Activated B cell treated with CpG ODN at 0.5 μM for 24 hours (primary cell): ENCODE measurements at regions of chr19 and their contacts with region 1.

Region 1: DNA sequence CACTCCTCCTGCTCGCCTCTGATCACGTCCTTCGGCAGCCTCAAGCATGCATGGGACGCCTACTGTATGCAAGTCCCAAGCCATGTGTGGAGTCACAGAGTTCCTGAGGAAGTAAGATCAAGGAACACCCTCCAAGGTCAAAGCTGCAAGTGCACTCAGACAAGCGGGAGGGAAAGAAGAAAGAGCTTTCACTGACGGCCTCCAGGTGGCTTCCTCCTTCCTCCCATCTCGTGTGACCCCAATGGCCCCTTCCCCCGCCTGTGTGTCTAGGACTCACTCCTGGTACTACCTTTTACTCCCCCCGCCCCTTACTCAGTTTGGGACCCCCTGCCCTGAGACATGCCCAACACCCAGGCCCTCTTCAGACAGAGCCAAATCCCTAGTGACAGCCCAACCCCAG is 6.0 kb downstream of the HAUS8 start:
- DNase-seq: no peak
- ATAC-seq: no peak
- H3K4me3 Mint-ChIP-seq: no peak overlapping the region
- H3K27ac Mint-ChIP-seq: no peak overlapping the region
- H3K4me1 Mint-ChIP-seq: peaks cover 57% of the 10 kb centered on the region
- H3K27me3 Mint-ChIP-seq: no peaks in the 10 kb centered on the region
- CTCF ChIP-seq: no peak

Region 2: GRCh38 chr19:16836115-16837034 is 232.8 kb before region 1 on chr19:
- CTCF ChIA-PET with region 1: no interaction called
- POLR2A ChIA-PET with region 1: no interaction called
- intact Hi-C with region 1: loop called (anchors 5 kb)
- DNase-seq: peak; percentile 29
- ATAC-seq: peak; percentile 81
- H3K4me3 Mint-ChIP-seq: no peak overlapping the region
- H3K27ac Mint-ChIP-seq: peak overlapping the region; percentile 80
- H3K4me1 Mint-ChIP-seq: peaks cover 42% of the 10 kb centered on the region
- H3K27me3 Mint-ChIP-seq: no peaks in the 10 kb centered on the region
- CTCF ChIP-seq: no peak

Region 3: DNA sequence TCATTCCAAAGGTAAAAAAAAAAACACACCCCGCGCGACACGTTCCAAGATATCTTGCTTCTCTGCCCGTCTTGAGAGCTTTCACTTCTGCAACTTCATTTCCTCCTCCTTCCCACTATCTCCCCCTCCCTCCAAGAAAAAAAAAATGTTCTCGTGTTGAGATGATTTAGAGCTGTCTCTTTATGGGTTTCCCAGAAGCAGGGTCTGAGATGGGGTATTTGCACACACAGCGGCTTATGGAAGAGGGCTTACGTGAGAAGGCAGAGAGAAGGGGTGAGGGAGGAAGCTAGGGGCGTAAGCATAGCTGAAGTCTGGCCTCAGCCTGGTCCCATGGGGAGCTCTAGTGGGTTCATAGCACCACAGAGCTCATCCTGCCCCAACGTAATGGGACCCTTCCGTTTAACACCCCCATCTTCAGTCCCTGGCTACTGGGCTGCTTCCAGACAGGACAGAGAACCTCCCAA is 114.7 kb after region 1 on chr19:
- CTCF ChIA-PET with region 1: interaction called, 8 read pairs
- POLR2A ChIA-PET with region 1: interaction called, 6 read pairs
- intact Hi-C with region 1: loop called (anchors 1 kb)
- DNase-seq: peak; percentile 42
- ATAC-seq: peak; percentile 85
- H3K4me3 Mint-ChIP-seq: peak overlapping the region; percentile 79
- H3K27ac Mint-ChIP-seq: peak overlapping the region; percentile 99
- H3K4me1 Mint-ChIP-seq: peaks cover 32% of the 10 kb centered on the region
- H3K27me3 Mint-ChIP-seq: no peaks in the 10 kb centered on the region
- CTCF ChIP-seq: no peak

Region 4: GRCh38 chr19:17235618-17236377 is 166.6 kb after region 1 on chr19:
- CTCF ChIA-PET with region 1: interaction called, 9 read pairs
- POLR2A ChIA-PET with region 1: no interaction called
- intact Hi-C with region 1: loop called (anchors 1 kb)
- DNase-seq: peak; percentile 66
- ATAC-seq: peak; percentile 90
- H3K4me3 Mint-ChIP-seq: peak overlapping the region; percentile 82
- H3K27ac Mint-ChIP-seq: no peak overlapping the region
- H3K4me1 Mint-ChIP-seq: peaks cover 9% of the 10 kb centered on the region
- H3K27me3 Mint-ChIP-seq: no peaks in the 10 kb centered on the region
- CTCF ChIP-seq: no peak

Region 5: DNA sequence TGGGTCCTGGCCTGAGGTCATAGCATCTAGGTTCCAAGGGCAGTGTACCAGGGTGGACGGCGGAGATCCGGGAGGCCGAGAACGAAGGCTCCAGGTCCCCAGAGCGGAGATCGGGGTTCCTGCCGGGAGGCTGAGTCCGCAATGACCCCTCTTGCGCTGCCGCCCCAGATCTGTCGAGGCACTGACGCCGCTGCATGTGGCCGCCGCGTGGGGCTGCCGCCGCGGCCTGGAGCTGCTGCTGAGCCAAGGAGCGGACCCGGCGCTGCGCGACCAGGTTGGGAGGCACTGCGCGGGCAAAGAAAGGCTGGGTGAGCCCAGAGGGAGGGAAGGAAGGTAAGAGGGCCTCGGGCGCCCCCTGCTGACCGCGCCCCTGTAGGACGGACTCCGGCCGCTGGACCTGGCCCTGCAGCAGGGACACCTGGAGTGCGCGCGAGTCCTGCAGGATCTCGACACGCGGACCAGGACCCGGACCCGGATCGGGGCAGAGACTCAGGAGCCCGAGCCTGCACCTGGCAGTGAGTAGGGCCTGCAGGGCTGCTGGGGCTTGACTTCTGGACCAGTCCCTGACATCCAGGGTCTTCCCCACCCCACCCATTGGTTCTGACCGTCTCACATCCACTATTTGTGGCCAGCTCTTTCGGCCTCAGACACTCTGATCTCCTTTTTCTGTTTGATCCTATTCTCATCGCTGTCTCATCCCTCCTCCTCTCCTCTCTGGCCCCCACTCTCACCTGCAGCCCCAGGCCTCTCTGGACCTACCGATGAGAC is 213.5 kb after region 1 on chr19:
- CTCF ChIA-PET with region 1: interaction called, 10 read pairs
- POLR2A ChIA-PET with region 1: interaction called, 13 read pairs
- intact Hi-C with region 1: loop called (anchors 1 kb)
- DNase-seq: peak; percentile 79
- ATAC-seq: peak; percentile 84
- H3K4me3 Mint-ChIP-seq: peak overlapping the region; percentile 85
- H3K27ac Mint-ChIP-seq: no peak overlapping the region
- H3K4me1 Mint-ChIP-seq: peaks cover 12% of the 10 kb centered on the region
- H3K27me3 Mint-ChIP-seq: no peaks in the 10 kb centered on the region
- CTCF ChIP-seq: peak; percentile 52